T-cell (primary cell): ENCODE measurements at regions of chr5 and their contacts with region 1.

Region 1: DNA sequence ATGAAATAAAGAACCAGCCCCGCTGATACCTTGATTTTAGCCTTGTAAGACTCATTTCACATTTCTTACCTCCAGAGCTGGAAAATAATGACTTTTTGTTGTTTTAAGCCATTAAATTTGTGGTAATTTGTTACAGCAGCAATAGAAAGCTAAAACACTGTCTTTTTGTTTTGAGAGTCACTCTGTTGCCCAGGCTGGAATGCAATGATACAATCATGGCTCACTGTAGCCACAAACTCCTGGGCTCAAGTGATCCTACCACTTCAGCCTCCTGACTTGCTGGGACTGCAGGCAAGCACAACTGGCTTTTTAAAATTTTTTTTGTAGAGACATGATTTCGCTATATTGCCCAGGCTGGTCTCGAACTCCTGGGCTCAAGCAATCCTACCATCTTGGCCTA is 34.7 kb upstream of the MYO10 start:
- DNase-seq: no peak
- ATAC-seq: no peak
- H3K4me3 ChIP-seq: no peak overlapping the region
- H3K4me3 Mint-ChIP-seq: no peak overlapping the region
- H3K27ac ChIP-seq: no peak overlapping the region
- H3K27ac Mint-ChIP-seq: no peak overlapping the region
- H3K4me1 ChIP-seq: no peaks in the 10 kb centered on the region
- H3K4me1 Mint-ChIP-seq: no peaks in the 10 kb centered on the region
- H3K27me3 ChIP-seq: no peaks in the 10 kb centered on the region
- H3K27me3 Mint-ChIP-seq: no peaks in the 10 kb centered on the region

Region 2: DNA sequence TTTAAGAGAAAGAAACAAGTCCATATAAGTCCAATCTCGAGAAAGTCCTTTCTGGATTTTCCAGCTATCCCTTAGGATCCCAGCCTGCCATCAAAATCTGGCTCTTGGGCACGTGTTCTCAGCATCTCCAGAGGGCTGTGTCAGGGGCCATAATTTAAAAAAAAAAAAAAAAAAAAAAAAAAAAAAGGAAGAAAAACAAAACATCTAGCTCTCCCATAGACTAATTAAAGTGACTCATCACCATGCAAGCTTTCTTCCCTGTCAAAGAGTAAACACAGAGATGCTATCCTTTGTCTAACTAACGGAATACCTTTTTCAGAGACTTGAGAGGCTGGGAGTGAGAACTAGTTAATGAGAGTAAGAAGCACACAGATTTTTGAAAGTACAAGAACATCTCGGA is 10.2 kb after region 1 on chr5:
- CTCF ChIA-PET with region 1: no interaction called
- POLR2A ChIA-PET with region 1: interaction called in 1 of 2 experiments, 18 read pairs
- DNase-seq: no peak
- ATAC-seq: no peak
- H3K4me3 ChIP-seq: no peak overlapping the region
- H3K4me3 Mint-ChIP-seq: no peak overlapping the region
- H3K27ac ChIP-seq: no peak overlapping the region
- H3K27ac Mint-ChIP-seq: no peak overlapping the region
- H3K4me1 ChIP-seq: no peaks in the 10 kb centered on the region
- H3K4me1 Mint-ChIP-seq: no peaks in the 10 kb centered on the region
- H3K27me3 ChIP-seq: no peaks in the 10 kb centered on the region
- H3K27me3 Mint-ChIP-seq: peaks cover 3% of the 10 kb centered on the region in 2 donors

Region 3: DNA sequence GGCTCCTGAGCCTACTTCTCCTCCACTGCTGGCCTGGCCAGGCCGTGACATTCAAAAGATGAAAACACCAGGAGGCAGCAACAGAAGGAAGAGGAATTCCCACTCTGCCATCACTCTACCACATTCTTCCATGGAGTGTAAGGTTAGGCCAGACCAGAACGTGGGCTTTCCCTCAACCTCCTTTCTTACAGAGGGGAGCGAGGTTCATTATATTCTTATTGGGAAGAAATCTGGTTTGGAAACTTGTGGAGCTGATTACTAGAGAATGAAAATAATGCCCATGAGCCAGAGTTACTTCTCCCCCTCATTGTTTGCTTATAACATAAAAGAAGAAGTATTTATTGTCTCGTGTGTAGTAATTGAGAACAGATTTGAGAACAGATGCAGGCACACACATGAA is 110.3 kb after region 1 on chr5:
- CTCF ChIA-PET with region 1: no interaction called
- POLR2A ChIA-PET with region 1: no interaction called
- DNase-seq: no peak
- ATAC-seq: no peak
- H3K4me3 ChIP-seq: no peak overlapping the region
- H3K4me3 Mint-ChIP-seq: no peak overlapping the region
- H3K27ac ChIP-seq: no peak overlapping the region
- H3K27ac Mint-ChIP-seq: no peak overlapping the region
- H3K4me1 ChIP-seq: no peaks in the 10 kb centered on the region
- H3K4me1 Mint-ChIP-seq: peaks cover 0 to 4% (median 0%) of the 10 kb centered on the region in 3 donors
- H3K27me3 ChIP-seq: no peaks in the 10 kb centered on the region
- H3K27me3 Mint-ChIP-seq: peaks cover 0 to 4% of the 10 kb centered on the region in 2 donors